ENCODE measurements at regions of chr19 and their contacts with region 1.

Region 1: DNA sequence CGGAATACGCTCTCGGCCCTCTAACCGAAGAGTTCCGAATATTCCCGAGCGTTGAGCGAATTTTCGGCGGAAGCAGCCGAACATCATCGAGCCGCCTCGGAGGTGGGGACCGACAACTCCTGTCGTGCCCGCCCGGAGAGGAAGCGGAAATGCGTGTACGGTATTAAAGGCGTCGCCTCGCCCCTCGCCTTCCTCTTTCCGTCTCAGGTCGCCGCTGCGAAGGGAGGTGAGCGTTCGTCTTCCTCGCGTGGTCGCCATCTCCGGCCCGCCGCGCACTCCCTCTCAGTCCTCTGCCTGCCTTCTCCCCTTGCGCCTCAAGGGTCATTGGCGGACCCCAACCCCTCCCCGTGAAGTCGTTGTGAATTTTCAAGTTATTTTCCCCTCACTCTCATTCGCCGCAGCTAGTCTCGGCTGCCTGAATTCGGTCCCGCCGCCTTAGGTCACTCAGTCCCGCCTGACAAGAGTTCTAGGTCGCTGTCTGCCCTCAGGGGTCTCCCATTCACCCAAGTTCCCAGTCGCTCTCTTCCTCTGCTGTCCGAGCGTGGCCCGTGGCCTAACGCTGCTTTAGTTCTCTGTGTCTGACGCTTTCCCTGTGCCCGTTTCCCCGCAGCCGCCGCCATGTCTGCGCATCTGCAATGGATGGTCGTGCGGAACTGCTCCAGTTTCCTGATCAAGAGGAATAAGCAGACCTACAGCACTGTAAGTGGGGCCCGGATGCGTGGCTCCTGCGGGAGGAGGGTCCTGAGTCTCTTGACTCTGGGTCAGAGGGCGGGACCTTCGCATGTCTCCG is at the start of gene RPL28:
- DNase-seq: peak; percentile 98 to 100
- H3K4me3 ChIP-seq: peak within 1 kb of the TSS; percentile 88
- H3K27ac ChIP-seq: peak within 1 kb of the TSS; percentile 83
- H3K4me1 ChIP-seq: peaks cover 39% of the 10 kb centered on the region
- H3K27me3 ChIP-seq: no peaks in the 10 kb centered on the region
- CTCF ChIP-seq: no peak
- total RNA-seq, gene RPL28: 2,433 and 2,547 TPM in 2 replicates

Region 2: GRCh38 chr19:55289117-55289796 is 96.7 kb before region 1 on chr19:
- CTCF ChIA-PET with region 1: no interaction called
- POLR2A ChIA-PET with region 1: no interaction called
- intact Hi-C with region 1: loop called (anchors 2 kb)
- DNase-seq: no peak
- H3K4me3 ChIP-seq: no peak overlapping the region
- H3K27ac ChIP-seq: no peak overlapping the region
- H3K4me1 ChIP-seq: no peaks in the 10 kb centered on the region
- H3K27me3 ChIP-seq: no peaks in the 10 kb centered on the region
- CTCF ChIP-seq: no peak

Region 3: GRCh38 chr19:55301459-55302317 is 84.2 kb before region 1 on chr19:
- CTCF ChIA-PET with region 1: interaction called, 10 read pairs
- POLR2A ChIA-PET with region 1: interaction called, 5 read pairs
- intact Hi-C with region 1: loop called (anchors 1 kb)
- DNase-seq: peak; percentile 49 to 94
- H3K4me3 ChIP-seq: peak overlapping the region; percentile 55
- H3K27ac ChIP-seq: no peak overlapping the region
- H3K4me1 ChIP-seq: 0 out of 2 replicates have a peak, but pooled peaks cover 4% of the 10 kb centered on the region
- H3K27me3 ChIP-seq: no peaks in the 10 kb centered on the region
- CTCF ChIP-seq: peak; percentile 100

Region 4: GRCh38 chr19:55407800-55408532 is 22.0 kb after region 1 on chr19:
- CTCF ChIA-PET with region 1: interaction called, 4 read pairs
- POLR2A ChIA-PET with region 1: interaction called, 15 read pairs
- intact Hi-C with region 1: loop called (anchors 2 kb)
- DNase-seq: peak; percentile 95 to 98
- H3K4me3 ChIP-seq: peak overlapping the region; percentile 63
- H3K27ac ChIP-seq: peak overlapping the region; percentile 86
- H3K4me1 ChIP-seq: peaks cover 21% of the 10 kb centered on the region
- H3K27me3 ChIP-seq: no peaks in the 10 kb centered on the region
- CTCF ChIP-seq: no peak

Region 5: GRCh38 chr19:55576746-55577145 is 190.8 kb after region 1 on chr19:
- CTCF ChIA-PET with region 1: no interaction called
- POLR2A ChIA-PET with region 1: no interaction called
- intact Hi-C with region 1: no loop called
- DNase-seq: no peak
- H3K4me3 ChIP-seq: no peak overlapping the region
- H3K27ac ChIP-seq: no peak overlapping the region
- H3K4me1 ChIP-seq: 0 out of 2 replicates have a peak, but pooled peaks cover 3% of the 10 kb centered on the region
- H3K27me3 ChIP-seq: no peaks in the 10 kb centered on the region
- CTCF ChIP-seq: no peak